H1 (cell line): ENCODE measurements at regions of chr12 and their contacts with region 1.

Region 1: DNA sequence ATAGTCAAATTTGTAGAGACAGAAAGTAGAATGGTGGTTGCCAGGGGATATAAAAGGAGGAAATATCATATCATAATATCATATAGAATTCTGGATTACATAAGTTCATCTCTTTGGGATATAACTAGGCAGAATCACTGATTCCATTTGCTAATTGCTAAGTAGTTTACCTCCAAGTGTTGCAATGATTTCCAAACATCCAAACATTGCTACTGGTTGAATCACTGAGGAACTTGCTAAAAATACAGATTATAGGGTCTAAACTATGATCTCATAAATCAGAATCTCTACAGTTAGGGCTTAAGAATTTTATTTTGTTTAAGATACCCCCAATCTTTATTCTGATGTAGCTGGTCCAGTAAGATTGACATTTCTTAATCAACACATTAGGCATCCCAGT is 16.1 kb upstream of the TAS2R42 start:
- DNase-seq: no peak
- H3K4me3 ChIP-seq: no peak overlapping the region
- H3K27ac ChIP-seq: no peak overlapping the region
- H3K4me1 ChIP-seq: no peaks in the 10 kb centered on the region; a peak in 1 of 7 replicates
- H3K27me3 ChIP-seq: no peaks in the 10 kb centered on the region
- CTCF ChIP-seq: no peak
- EP300 ChIP-seq: no peak
- POLR2A ChIP-seq: no peak
- RAD21 ChIP-seq: no peak

Region 2: GRCh38 chr12:10771132-10771733 is 431.6 kb before region 1 on chr12:
- CTCF ChIA-PET with region 1: interaction called, 75 read pairs
- POLR2A ChIA-PET with region 1: no interaction called
- DNase-seq: no peak
- H3K4me3 ChIP-seq: no peak overlapping the region
- H3K27ac ChIP-seq: no peak overlapping the region
- H3K4me1 ChIP-seq: no peaks in the 10 kb centered on the region
- H3K27me3 ChIP-seq: no peaks in the 10 kb centered on the region
- CTCF ChIP-seq: peak in 2 of 3 experiments; percentile 28 to 47; a peak in 2 of 4 replicates
- EP300 ChIP-seq: no peak
- POLR2A ChIP-seq: no peak
- RAD21 ChIP-seq: peak; percentile 70 to 86

Region 3: GRCh38 chr12:10779103-10779502 is 423.7 kb before region 1 on chr12:
- CTCF ChIA-PET with region 1: interaction called, 75 read pairs
- POLR2A ChIA-PET with region 1: no interaction called
- DNase-seq: no peak
- H3K4me3 ChIP-seq: no peak overlapping the region
- H3K27ac ChIP-seq: no peak overlapping the region
- H3K4me1 ChIP-seq: no peaks in the 10 kb centered on the region
- H3K27me3 ChIP-seq: no peaks in the 10 kb centered on the region
- CTCF ChIP-seq: no peak
- EP300 ChIP-seq: no peak
- POLR2A ChIP-seq: no peak
- RAD21 ChIP-seq: no peak

Region 4: GRCh38 chr12:11246489-11246888 is 43.7 kb after region 1 on chr12:
- CTCF ChIA-PET with region 1: no interaction called
- POLR2A ChIA-PET with region 1: no interaction called
- DNase-seq: no peak
- H3K4me3 ChIP-seq: no peak overlapping the region
- H3K27ac ChIP-seq: no peak overlapping the region
- H3K4me1 ChIP-seq: no peaks in the 10 kb centered on the region
- H3K27me3 ChIP-seq: no peaks in the 10 kb centered on the region
- CTCF ChIP-seq: no peak
- EP300 ChIP-seq: no peak
- POLR2A ChIP-seq: no peak
- RAD21 ChIP-seq: no peak